Aorta (tissue), 5 donors: ENCODE measurements at regions of chr2 and their contacts with region 1.

Region 1: GRCh38 chr2:236180831-236181453 is 12.8 kb upstream of the GBX2 start:
- DNase-seq: no peak
- ATAC-seq: no peak
- H3K4me3 ChIP-seq: no peak overlapping the region
- H3K27ac ChIP-seq: no peak overlapping the region
- H3K4me1 ChIP-seq: no peaks in the 10 kb centered on the region
- H3K27me3 ChIP-seq: peaks cover 0 to 1% of the 10 kb centered on the region in 2 donors

Region 2: GRCh38 chr2:235766278-235766677 is 414.7 kb before region 1 on chr2:
- intact Hi-C with region 1: loop called (anchors 5 kb)
- DNase-seq: no peak
- ATAC-seq: peak; percentile 91
- H3K4me3 ChIP-seq: no peak overlapping the region
- H3K27ac ChIP-seq: no peak overlapping the region
- H3K4me1 ChIP-seq: no peaks in the 10 kb centered on the region
- H3K27me3 ChIP-seq: no peaks in the 10 kb centered on the region

Region 3: GRCh38 chr2:235940330-235940729 is 240.6 kb before region 1 on chr2:
- intact Hi-C with region 1: no loop called
- DNase-seq: peak in 1 of 2 donors; percentile 65
- ATAC-seq: peak; percentile 27
- H3K4me3 ChIP-seq: no peak overlapping the region
- H3K27ac ChIP-seq: no peak overlapping the region
- H3K4me1 ChIP-seq: no peaks in the 10 kb centered on the region
- H3K27me3 ChIP-seq: no peaks in the 10 kb centered on the region

Region 4: GRCh38 chr2:236250909-236251579 is 70.1 kb after region 1 on chr2:
- intact Hi-C with region 1: no loop called
- DNase-seq: no peak
- ATAC-seq: no peak
- H3K4me3 ChIP-seq: no peak overlapping the region
- H3K27ac ChIP-seq: no peak overlapping the region
- H3K4me1 ChIP-seq: no peaks in the 10 kb centered on the region
- H3K27me3 ChIP-seq: peaks cover 0 to 4% of the 10 kb centered on the region in 2 donors

Region 5: DNA sequence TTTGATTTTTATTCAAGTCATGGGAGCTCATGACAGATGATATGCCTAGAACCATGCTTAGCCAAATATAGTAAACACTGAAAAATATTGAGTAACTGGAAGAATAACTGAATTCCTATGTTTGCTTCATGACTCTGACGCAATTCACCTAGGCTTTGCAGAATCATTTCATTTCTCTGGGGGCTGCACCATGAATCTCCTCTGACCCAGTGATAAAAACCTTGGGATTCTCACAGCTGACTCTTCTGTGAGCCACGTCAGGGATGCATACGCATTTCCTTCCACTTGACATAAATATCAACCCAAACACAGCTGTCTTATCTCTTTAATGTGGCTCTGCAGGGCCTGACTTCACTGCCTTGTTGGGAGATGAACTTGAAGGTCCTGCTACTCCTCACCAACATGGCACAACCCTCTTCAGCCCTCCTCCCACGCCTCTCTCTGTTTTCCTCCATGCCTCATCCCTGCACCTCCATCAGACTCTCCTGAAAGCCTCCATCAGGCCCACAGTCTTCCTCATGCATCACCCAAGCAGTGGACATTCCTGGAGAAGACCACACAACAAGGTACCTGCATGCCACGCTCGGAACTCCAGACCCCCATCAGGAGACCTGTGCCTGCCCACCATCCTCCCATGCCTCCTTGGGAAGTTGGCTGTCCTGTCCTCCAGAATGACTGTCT is 1203.2 kb after region 1 on chr2:
- intact Hi-C with region 1: no loop called
- DNase-seq: no peak
- ATAC-seq: no peak
- H3K4me3 ChIP-seq: no peak overlapping the region
- H3K27ac ChIP-seq: no peak overlapping the region
- H3K4me1 ChIP-seq: no peaks in the 10 kb centered on the region
- H3K27me3 ChIP-seq: no peaks in the 10 kb centered on the region